CD4-positive, alpha-beta memory T cell (primary cell): ENCODE measurements at regions of chr22 and their contacts with region 1.

Region 1: DNA sequence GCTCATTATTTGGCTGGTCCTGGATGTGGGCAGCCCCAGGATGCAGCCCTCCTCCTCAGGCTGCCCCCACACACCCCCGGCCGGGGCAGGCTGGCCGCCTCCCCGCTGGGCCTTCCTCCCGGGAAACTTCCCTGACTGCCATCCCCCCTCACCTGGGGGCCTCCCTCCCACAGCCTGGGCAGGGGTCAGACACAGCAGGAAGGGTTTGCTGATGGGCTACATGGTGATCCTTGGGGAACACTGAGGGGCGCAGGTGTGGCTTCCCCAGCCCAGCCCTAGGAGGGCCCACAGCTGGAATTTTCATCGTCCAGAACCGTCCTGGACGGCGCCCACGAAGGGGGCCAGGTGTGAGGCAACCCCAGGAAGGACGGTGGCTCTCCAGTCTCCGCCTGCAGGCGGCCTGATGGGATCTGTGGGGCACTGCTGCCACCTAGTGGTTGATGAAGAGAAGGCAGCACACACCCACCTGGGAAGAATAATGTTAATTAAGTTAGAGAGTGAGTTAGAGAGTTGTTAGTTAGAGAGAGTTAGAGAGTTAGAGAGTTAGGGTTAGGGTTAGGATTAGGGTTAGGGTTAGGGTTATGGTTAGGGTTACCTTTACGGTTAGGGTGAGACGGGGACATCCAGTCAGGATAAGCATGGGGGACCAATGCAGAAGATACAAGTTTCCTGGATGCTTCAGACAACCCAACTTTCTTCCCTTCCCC is 75.9 kb upstream of the PRR5 start:
- DNase-seq: peak; percentile 73 to 80 (median 77)
- H3K4me3 ChIP-seq: no peak overlapping the region
- H3K4me3 Mint-ChIP-seq: no peak overlapping the region
- H3K27ac ChIP-seq: no peak overlapping the region
- H3K27ac Mint-ChIP-seq: peak overlapping the region; percentile 2 to 45 (median 22)
- H3K4me1 ChIP-seq: no peaks in the 10 kb centered on the region
- H3K4me1 Mint-ChIP-seq: peaks cover 4 to 12% (median 7%) of the 10 kb centered on the region in 4 donors
- H3K27me3 ChIP-seq: no peaks in the 10 kb centered on the region
- H3K27me3 Mint-ChIP-seq: peaks cover 0 to 2% of the 10 kb centered on the region in 2 donors

Region 2: GRCh38 chr22:43884600-43885325 is 741.4 kb before region 1 on chr22:
- CTCF ChIA-PET with region 1: interaction called, 5 read pairs
- POLR2A ChIA-PET with region 1: no interaction called
- intact Hi-C with region 1: loop called (anchors 10 kb)
- DNase-seq: peak in 2 of 5 donors; percentile 17
- H3K4me3 ChIP-seq: no peak overlapping the region
- H3K4me3 Mint-ChIP-seq: no peak overlapping the region
- H3K27ac ChIP-seq: no peak overlapping the region
- H3K27ac Mint-ChIP-seq: no peak overlapping the region
- H3K4me1 ChIP-seq: no peaks in the 10 kb centered on the region
- H3K4me1 Mint-ChIP-seq: peaks cover 0 to 8% (median 3%) of the 10 kb centered on the region in 4 donors
- H3K27me3 ChIP-seq: peaks cover 2% of the 10 kb centered on the region
- H3K27me3 Mint-ChIP-seq: peaks cover 16 to 26% of the 10 kb centered on the region in 2 donors

Region 3: GRCh38 chr22:44080936-44081861 is 544.9 kb before region 1 on chr22:
- CTCF ChIA-PET with region 1: interaction called, 70 read pairs
- POLR2A ChIA-PET with region 1: no interaction called
- intact Hi-C with region 1: loop called (anchors 1 kb)
- DNase-seq: peak; percentile 52 to 63 (median 59)
- H3K4me3 ChIP-seq: no peak overlapping the region
- H3K4me3 Mint-ChIP-seq: no peak overlapping the region
- H3K27ac ChIP-seq: no peak overlapping the region
- H3K27ac Mint-ChIP-seq: no peak overlapping the region
- H3K4me1 ChIP-seq: peaks cover 4% of the 10 kb centered on the region
- H3K4me1 Mint-ChIP-seq: no peaks in the 10 kb centered on the region
- H3K27me3 ChIP-seq: no peaks in the 10 kb centered on the region
- H3K27me3 Mint-ChIP-seq: no peaks in the 10 kb centered on the region

Region 4: DNA sequence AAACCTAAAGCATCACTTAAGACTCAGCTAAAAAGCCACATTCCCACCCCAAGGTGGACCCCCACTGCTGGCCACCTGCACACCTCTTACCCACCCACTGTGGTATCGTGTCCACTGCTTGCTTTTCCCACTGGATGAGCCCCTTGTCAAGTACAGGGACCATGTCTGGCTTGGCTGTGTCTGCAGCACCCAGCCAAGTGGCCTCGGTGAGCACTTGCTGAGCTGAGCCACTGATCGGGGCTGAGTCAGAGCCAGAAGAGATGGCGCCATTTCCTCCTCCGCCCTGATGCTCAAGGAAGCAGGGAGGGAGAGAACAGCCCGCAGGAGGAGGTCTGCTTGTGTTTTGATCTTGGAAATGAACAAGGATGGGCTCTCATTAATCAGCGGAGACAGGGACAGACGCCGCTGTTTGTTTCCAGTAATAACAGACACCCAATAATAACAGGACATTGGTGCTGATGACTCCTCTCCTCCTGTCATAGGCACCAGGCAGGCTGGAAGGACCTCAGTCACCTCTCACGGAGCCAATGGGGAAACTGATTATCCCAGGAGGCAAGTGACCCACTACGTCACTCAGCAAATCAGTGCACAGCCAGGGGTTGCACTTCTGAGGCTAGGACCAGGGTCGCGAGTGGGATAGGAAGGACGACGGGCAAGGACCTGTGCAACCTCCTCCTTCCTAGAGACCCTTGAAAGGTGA is 42.9 kb before region 1 on chr22:
- CTCF ChIA-PET with region 1: no interaction called
- POLR2A ChIA-PET with region 1: no interaction called
- intact Hi-C with region 1: no loop called
- DNase-seq: no peak
- H3K4me3 ChIP-seq: no peak overlapping the region
- H3K4me3 Mint-ChIP-seq: no peak overlapping the region
- H3K27ac ChIP-seq: no peak overlapping the region
- H3K27ac Mint-ChIP-seq: no peak overlapping the region
- H3K4me1 ChIP-seq: no peaks in the 10 kb centered on the region
- H3K4me1 Mint-ChIP-seq: peaks cover 2 to 9% (median 6%) of the 10 kb centered on the region in 4 donors
- H3K27me3 ChIP-seq: no peaks in the 10 kb centered on the region
- H3K27me3 Mint-ChIP-seq: peaks cover 17 to 38% of the 10 kb centered on the region in 2 donors